HepG2 (cell line): ENCODE measurements at regions of chr19 and their contacts with region 1.

Region 1: GRCh38 chr19:41144403-41144802 is 30.2 kb downstream of the CYP2F1 start:
- DNase-seq: peak; percentile 68
- ATAC-seq: peak; percentile 78
- H3K4me3 ChIP-seq: no peak overlapping the region
- H3K27ac ChIP-seq: no peak overlapping the region
- H3K4me1 ChIP-seq: no peaks in the 10 kb centered on the region
- H3K27me3 ChIP-seq: no peaks in the 10 kb centered on the region; a peak in 2 of 5 replicates
- CTCF ChIP-seq: peak; percentile 90
- EP300 ChIP-seq: no peak
- POLR2A ChIP-seq: no peak
- RAD21 ChIP-seq: peak; percentile 76

Region 2: GRCh38 chr19:40974633-40975037 is 169.8 kb before region 1 on chr19:
- CTCF ChIA-PET with region 1: interaction called, 15 read pairs
- POLR2A ChIA-PET with region 1: no interaction called
- in situ Hi-C with region 1: loop called (anchors 10 kb)
- intact Hi-C with region 1: loop called (anchors 1 kb)
- DNase-seq: peak; percentile 62
- ATAC-seq: peak; percentile 77
- H3K4me3 ChIP-seq: no peak overlapping the region
- H3K27ac ChIP-seq: no peak overlapping the region
- H3K4me1 ChIP-seq: peaks cover 2% of the 10 kb centered on the region
- H3K27me3 ChIP-seq: peaks cover 0 to 6% of the 10 kb centered on the region in 2 experiments; a peak in 2 of 5 replicates
- CTCF ChIP-seq: peak; percentile 81
- EP300 ChIP-seq: no peak
- POLR2A ChIP-seq: no peak
- RAD21 ChIP-seq: peak; percentile 34; the same call in 1 of the 2 replicates

Region 3: GRCh38 chr19:41133260-41133659 is 11.1 kb before region 1 on chr19:
- CTCF ChIA-PET with region 1: interaction called, 16 read pairs
- POLR2A ChIA-PET with region 1: no interaction called
- in situ Hi-C with region 1: no loop called
- intact Hi-C with region 1: no loop called
- DNase-seq: no peak
- ATAC-seq: no peak
- H3K4me3 ChIP-seq: no peak overlapping the region
- H3K27ac ChIP-seq: no peak overlapping the region
- H3K4me1 ChIP-seq: no peaks in the 10 kb centered on the region
- H3K27me3 ChIP-seq: peaks cover 1 to 4% of the 10 kb centered on the region in 2 experiments; a peak in 4 of 5 replicates
- CTCF ChIP-seq: no peak
- EP300 ChIP-seq: no peak
- POLR2A ChIP-seq: no peak
- RAD21 ChIP-seq: no peak

Region 4: DNA sequence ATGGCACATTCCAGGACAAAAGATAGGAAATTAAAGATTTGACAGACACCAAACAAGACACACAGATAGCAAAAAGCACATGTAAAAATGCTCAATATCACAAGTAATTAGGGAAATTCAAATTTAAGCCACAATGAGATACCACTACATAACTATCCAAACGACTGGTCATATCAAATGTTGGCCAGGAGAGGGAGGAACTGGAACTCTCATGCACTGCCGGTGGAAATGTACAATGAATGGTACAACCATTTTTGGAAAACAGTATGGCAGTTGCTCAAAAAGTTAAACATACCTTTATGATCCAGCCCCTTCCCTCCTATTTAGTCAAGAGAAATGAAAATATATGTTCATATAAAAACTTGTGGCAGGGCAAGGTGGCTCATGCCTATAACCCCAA is 11.8 kb after region 1 on chr19:
- CTCF ChIA-PET with region 1: no interaction called
- POLR2A ChIA-PET with region 1: no interaction called
- in situ Hi-C with region 1: no loop called
- intact Hi-C with region 1: no loop called
- DNase-seq: no peak
- ATAC-seq: no peak
- H3K4me3 ChIP-seq: no peak overlapping the region
- H3K27ac ChIP-seq: no peak overlapping the region
- H3K4me1 ChIP-seq: peaks cover 26% of the 10 kb centered on the region
- H3K27me3 ChIP-seq: no peaks in the 10 kb centered on the region
- CTCF ChIP-seq: no peak
- EP300 ChIP-seq: no peak
- POLR2A ChIP-seq: no peak
- RAD21 ChIP-seq: no peak